HCT116 (cell line): ENCODE measurements at regions of chr2 and their contacts with region 1.

Region 1: GRCh38 chr2:27754138-27754588 is 17.4 kb upstream of the MRPL33 start:
- DNase-seq: peak; percentile 56
- ATAC-seq: peak; percentile 95
- H3K4me3 ChIP-seq: no peak overlapping the region; a peak in 1 of 4 replicates
- H3K27ac ChIP-seq: no peak overlapping the region
- H3K4me1 ChIP-seq: peaks cover 12 to 25% of the 10 kb centered on the region in 2 experiments
- H3K27me3 ChIP-seq: no peaks in the 10 kb centered on the region
- CTCF ChIP-seq: peak; percentile 94 to 99 (median 94)
- POLR2A ChIP-seq: no peak
- RAD21 ChIP-seq: peak; percentile 98

Region 2: DNA sequence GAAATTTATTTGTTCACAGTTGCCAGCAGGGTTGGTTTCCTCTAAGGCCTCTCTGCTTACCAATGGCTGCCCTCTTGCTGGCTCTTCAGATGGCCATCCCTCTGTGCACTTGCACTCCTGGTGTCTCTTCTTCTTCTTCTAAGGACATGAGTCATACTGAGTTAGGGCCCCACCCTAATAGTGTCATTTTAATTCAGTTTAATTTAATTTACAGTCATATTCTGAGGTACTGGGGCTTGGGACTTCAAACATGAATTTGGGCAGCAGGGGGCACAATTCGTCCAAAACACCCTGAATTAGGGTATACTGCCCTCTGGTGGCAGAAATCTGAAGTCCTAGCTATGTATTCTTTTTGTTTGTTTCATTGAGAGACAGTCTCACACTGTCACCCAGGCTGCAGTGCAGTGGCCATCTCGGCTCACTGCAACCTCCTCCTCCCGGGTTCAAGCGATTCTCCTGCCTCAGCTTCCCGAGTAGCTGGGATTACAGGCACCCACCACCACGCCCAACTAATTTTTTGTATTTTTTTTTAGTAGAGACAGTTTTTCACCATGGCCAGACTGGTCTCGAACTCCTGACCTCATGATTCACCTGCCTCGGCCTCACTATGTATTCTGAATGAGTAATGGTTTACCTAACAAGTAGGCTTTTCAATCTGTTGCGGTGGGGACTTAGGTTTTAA is 70.6 kb before region 1 on chr2:
- CTCF ChIA-PET with region 1: interaction called, 13 read pairs
- POLR2A ChIA-PET with region 1: no interaction called
- RAD21 ChIA-PET with region 1: no interaction called
- intact Hi-C with region 1: no loop called
- DNase-seq: peak; percentile 96
- ATAC-seq: peak; percentile 86
- H3K4me3 ChIP-seq: peak overlapping the region in 1 of 2 experiments; percentile 40; a peak in 2 of 4 replicates
- H3K27ac ChIP-seq: peak overlapping the region; percentile 70; the same call in 1 of the 2 replicates
- H3K4me1 ChIP-seq: peaks cover 25 to 35% of the 10 kb centered on the region in 2 experiments
- H3K27me3 ChIP-seq: no peaks in the 10 kb centered on the region
- CTCF ChIP-seq: peak; percentile 89 to 100 (median 98)
- POLR2A ChIP-seq: no peak
- RAD21 ChIP-seq: peak; percentile 97

Region 3: GRCh38 chr2:27723372-27724144 is 30.6 kb before region 1 on chr2:
- CTCF ChIA-PET with region 1: interaction called, 26 read pairs
- POLR2A ChIA-PET with region 1: interaction called, 14 read pairs
- RAD21 ChIA-PET with region 1: interaction called, 8 to 10 read pairs
- intact Hi-C with region 1: loop called (anchors 2 kb)
- DNase-seq: peak; percentile 62
- ATAC-seq: peak; percentile 59
- H3K4me3 ChIP-seq: no peak overlapping the region
- H3K27ac ChIP-seq: no peak overlapping the region
- H3K4me1 ChIP-seq: peaks cover 29 to 60% of the 10 kb centered on the region in 2 experiments
- H3K27me3 ChIP-seq: no peaks in the 10 kb centered on the region
- CTCF ChIP-seq: peak in 2 of 3 experiments; percentile 82 to 88; a peak in 4 of 6 replicates
- POLR2A ChIP-seq: no peak
- RAD21 ChIP-seq: no peak

Region 4: DNA sequence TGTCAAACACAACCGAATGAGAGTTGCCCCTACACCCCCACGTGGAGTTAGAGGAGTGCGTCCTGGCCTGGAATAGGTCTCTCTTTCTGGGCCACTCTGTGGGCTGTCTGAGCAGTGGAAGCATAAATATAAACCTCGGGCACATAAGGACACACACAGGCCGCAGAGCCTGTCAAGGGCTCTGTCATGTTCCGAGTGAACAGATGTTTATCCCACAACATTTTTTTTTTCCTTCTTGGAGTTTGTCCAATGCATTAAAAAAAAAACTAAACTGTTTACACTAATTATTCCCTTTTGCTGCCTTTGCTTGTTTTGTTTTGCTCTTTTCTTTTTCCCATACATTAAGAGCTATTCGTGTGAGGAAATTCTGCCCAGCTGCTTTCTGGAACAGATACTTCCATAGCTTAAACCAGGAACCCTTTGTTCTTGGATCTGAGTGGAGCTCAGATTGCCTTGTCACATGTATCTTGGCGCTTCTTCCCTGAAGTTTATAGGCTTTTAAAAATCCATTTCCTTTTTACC is 410.2 kb after region 1 on chr2:
- CTCF ChIA-PET with region 1: no interaction called
- POLR2A ChIA-PET with region 1: no interaction called
- RAD21 ChIA-PET with region 1: no interaction called
- intact Hi-C with region 1: no loop called
- DNase-seq: no peak
- ATAC-seq: no peak
- H3K4me3 ChIP-seq: no peak overlapping the region
- H3K27ac ChIP-seq: no peak overlapping the region
- H3K4me1 ChIP-seq: peaks cover 5 to 19% of the 10 kb centered on the region in 2 experiments
- H3K27me3 ChIP-seq: no peaks in the 10 kb centered on the region
- CTCF ChIP-seq: no peak
- POLR2A ChIP-seq: no peak
- RAD21 ChIP-seq: no peak

Region 5: DNA sequence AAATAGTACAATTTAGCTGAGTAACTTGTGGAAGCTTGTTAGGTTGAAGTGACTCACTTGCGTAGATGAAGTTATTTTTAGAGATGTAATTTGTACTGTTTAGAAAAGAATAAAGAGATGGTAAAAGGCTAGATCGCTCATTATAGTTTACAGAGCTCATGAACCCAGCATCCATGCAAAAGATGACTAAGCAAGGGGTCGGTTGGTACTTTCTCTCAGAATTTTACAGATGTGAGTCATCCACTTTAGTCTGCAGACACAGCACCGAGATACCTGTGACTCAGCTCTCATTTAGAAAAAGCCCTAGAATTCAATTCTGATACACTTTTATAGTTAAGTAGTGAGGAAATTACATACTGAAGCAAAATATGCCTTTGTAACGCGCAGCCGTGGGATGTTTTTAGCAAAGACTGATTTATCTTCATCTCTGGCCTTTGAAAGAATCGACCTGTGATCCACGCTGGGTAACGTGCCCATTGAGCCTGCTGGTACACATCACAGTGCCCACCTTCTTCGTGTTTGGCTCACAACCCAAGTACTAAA is 522.0 kb after region 1 on chr2:
- CTCF ChIA-PET with region 1: no interaction called
- POLR2A ChIA-PET with region 1: no interaction called
- RAD21 ChIA-PET with region 1: no interaction called
- intact Hi-C with region 1: loop called (anchors 10 kb)
- DNase-seq: peak; percentile 81
- ATAC-seq: peak; percentile 76
- H3K4me3 ChIP-seq: peak overlapping the region in 1 of 2 experiments; percentile 25; a peak in 2 of 4 replicates
- H3K27ac ChIP-seq: peak overlapping the region; percentile 91
- H3K4me1 ChIP-seq: peaks cover 43 to 63% of the 10 kb centered on the region in 2 experiments
- H3K27me3 ChIP-seq: no peaks in the 10 kb centered on the region
- CTCF ChIP-seq: no peak
- POLR2A ChIP-seq: no peak
- RAD21 ChIP-seq: peak; percentile 36; the same call in 1 of the 2 replicates

Region 6: DNA sequence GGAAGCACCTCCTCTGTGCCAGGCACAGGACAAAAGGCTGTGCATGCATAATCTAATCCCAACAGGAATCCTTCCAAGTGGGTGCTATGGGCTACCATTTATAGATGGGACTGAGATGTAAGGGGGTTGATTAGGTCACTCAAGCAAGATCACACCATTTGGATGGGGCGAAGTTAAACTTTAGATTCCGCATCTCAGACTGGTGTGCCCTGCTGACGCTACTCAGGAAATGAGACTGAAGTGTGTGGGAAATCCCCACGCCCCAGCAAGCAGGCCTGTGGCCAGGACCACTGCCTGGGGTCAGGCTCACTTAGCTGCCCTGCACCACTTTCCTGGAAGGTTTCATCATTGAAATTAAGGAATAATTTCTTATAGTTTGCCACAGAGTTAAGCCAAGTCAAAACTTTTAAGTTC is 927.0 kb after region 1 on chr2:
- CTCF ChIA-PET with region 1: no interaction called
- POLR2A ChIA-PET with region 1: no interaction called
- RAD21 ChIA-PET with region 1: no interaction called
- intact Hi-C with region 1: no loop called
- DNase-seq: no peak
- ATAC-seq: no peak
- H3K4me3 ChIP-seq: no peak overlapping the region
- H3K27ac ChIP-seq: no peak overlapping the region
- H3K4me1 ChIP-seq: peaks cover 12 to 23% of the 10 kb centered on the region in 2 experiments
- H3K27me3 ChIP-seq: no peaks in the 10 kb centered on the region
- CTCF ChIP-seq: no peak
- POLR2A ChIP-seq: no peak
- RAD21 ChIP-seq: no peak

Region 7: GRCh38 chr2:28751252-28751955 is 997.2 kb after region 1 on chr2 and contains the start of gene PPP1CB:
- CTCF ChIA-PET with region 1: no interaction called
- POLR2A ChIA-PET with region 1: no interaction called
- RAD21 ChIA-PET with region 1: no interaction called
- intact Hi-C with region 1: loop called (anchors 5 kb)
- DNase-seq: peak; percentile 88
- ATAC-seq: peak; percentile 89
- H3K4me3 ChIP-seq: peak within 1 kb of the TSS; percentile 76 to 77
- H3K27ac ChIP-seq: peak within 1 kb of the TSS; percentile 95
- H3K4me1 ChIP-seq: peaks cover 3 to 19% of the 10 kb centered on the region in 2 experiments; a peak in 2 of 4 replicates
- H3K27me3 ChIP-seq: no peaks in the 10 kb centered on the region
- CTCF ChIP-seq: no peak; a peak in 1 of 6 replicates
- POLR2A ChIP-seq: peak; percentile 89
- RAD21 ChIP-seq: no peak; the same call in 1 of the 2 replicates
- total RNA-seq, gene PPP1CB: 174 TPM